ENCODE measurements at regions of chr1 and their contacts with region 1.

Region 1: DNA sequence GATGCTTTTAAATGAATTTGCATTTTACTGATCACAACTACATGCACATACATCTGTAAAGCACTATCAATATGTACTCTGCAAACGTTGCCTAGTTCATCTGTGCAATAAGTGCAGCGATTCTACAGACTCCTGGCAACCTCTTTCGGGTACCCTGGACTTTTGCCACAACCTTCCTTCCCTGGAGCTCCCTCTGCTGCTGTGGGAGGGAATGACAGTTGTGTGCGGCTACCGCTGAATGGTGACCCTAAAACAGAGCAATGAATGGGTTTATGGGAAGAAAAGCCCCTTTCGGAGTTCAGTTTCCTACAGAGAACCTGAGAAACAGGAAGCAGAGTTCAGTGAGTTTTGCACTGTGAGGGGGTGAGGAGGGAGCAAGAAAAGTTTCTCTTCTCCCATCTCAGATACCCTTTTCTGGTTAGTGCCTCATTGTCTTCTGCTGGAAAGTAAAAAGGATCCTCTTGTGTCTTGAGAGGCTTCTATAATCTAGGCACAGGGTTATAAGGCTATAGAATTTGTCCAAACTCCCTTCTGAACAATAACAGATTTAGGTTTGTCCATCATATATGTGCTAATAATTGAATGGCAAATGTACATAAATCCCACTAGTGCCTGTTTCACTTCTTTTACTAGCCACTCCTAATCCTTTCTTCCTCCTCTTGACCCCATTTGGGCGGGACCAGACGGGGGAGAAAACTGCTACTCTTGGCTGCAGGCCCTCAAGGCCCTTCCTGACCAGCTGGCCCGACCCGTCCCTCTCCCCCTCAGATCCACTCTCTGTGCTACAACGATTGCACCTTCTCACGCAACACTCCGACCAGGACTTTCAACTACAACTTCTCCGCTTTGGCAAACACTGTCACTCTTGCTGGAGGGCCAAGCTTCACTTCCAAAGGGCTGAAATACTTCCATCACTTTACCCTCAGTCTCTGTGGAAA is 19.8 kb upstream of the SARS1 start:
- DNase-seq: peak; percentile 47
- ATAC-seq: peak; percentile 97
- H3K4me3 Mint-ChIP-seq: peak overlapping the region; percentile 19
- H3K27ac Mint-ChIP-seq: no peak overlapping the region
- H3K4me1 Mint-ChIP-seq: peaks cover 14% of the 10 kb centered on the region
- H3K27me3 Mint-ChIP-seq: no peaks in the 10 kb centered on the region
- CTCF ChIP-seq: no peak

Region 2: DNA sequence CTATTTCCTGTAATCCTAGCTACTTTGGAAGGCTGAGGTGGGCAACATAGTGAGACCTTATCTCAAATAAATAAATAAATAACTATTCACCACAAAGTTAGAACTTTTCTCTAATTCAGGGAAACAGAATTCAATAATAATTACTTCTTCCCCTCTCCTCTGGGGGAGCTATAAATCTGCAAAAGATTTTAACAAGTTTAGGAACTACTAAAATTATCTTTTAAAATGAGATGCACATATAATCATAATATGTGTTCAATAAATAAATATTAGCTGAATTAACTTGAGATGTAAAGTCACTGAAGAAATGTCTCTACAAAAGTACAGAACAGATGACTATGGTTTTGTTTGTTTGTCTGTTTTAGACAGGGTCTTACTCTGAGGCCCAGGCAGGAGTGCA is 166.1 kb before region 1 on chr1:
- CTCF ChIA-PET with region 1: interaction called, 4 read pairs
- POLR2A ChIA-PET with region 1: no interaction called
- intact Hi-C with region 1: loop called (anchors 5 kb)
- DNase-seq: no peak
- ATAC-seq: no peak
- H3K4me3 Mint-ChIP-seq: no peak overlapping the region
- H3K27ac Mint-ChIP-seq: no peak overlapping the region
- H3K4me1 Mint-ChIP-seq: no peaks in the 10 kb centered on the region
- H3K27me3 Mint-ChIP-seq: no peaks in the 10 kb centered on the region
- CTCF ChIP-seq: no peak

Region 3: GRCh38 chr1:109041621-109042468 is 152.1 kb before region 1 on chr1 and contains the start of gene WDR47:
- CTCF ChIA-PET with region 1: no interaction called
- POLR2A ChIA-PET with region 1: no interaction called
- intact Hi-C with region 1: loop called (anchors 5 kb)
- DNase-seq: peak; percentile 89
- ATAC-seq: peak; percentile 96
- H3K4me3 Mint-ChIP-seq: peak within 1 kb of the TSS; percentile 88
- H3K27ac Mint-ChIP-seq: peak within 1 kb of the TSS; percentile 60
- H3K4me1 Mint-ChIP-seq: peaks cover 15% of the 10 kb centered on the region
- H3K27me3 Mint-ChIP-seq: no peaks in the 10 kb centered on the region
- CTCF ChIP-seq: no peak
- total RNA-seq, gene WDR47: 10.3 and 10.9 TPM in 2 replicates

Region 4: GRCh38 chr1:109137964-109138741 is 55.8 kb before region 1 on chr1:
- CTCF ChIA-PET with region 1: no interaction called
- POLR2A ChIA-PET with region 1: no interaction called
- intact Hi-C with region 1: no loop called
- DNase-seq: no peak
- ATAC-seq: no peak
- H3K4me3 Mint-ChIP-seq: no peak overlapping the region
- H3K27ac Mint-ChIP-seq: no peak overlapping the region
- H3K4me1 Mint-ChIP-seq: peaks cover 15% of the 10 kb centered on the region
- H3K27me3 Mint-ChIP-seq: no peaks in the 10 kb centered on the region
- CTCF ChIP-seq: no peak

Region 5: DNA sequence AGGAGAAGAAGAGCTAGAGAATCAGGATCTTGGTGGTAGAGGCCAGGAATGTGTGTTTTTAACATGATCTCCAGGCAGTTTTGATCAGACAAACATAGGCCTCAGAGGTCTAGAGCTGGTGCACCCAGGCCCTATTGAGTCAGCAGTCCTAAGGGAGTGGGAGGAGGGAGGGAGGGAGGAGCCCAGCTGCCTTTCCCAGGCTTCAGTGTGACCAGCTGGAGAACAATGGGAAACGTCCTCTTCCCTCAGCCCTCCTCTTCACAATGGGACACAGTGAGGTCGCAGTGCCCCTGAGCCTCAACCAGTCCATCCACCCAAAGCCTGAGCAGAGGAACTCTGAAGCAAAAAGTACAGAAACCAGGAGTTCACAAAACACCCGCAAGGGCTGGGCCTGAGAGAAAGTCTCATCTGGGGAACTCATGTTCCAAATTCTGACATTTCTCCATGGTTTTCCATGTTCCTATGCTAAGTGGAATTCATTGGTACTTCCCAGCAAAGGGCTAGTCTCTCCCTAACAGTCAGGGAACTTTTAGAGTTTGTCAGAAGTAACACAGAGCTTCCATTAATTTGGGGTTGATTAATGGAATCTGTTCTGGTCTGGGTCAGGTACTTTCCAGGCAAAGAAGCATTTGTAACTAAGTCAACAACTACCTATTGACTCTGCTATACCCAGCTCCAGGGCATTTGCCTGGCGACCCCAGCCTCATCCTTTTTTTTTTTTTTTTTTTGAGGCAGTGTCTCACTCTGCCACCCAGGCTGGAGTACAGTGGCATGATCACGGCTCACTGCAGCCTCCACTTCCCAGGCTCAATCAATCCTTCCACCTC is 42.5 kb before region 1 on chr1:
- CTCF ChIA-PET with region 1: no interaction called
- POLR2A ChIA-PET with region 1: no interaction called
- intact Hi-C with region 1: loop called (anchors 5 kb)
- DNase-seq: no peak
- ATAC-seq: no peak
- H3K4me3 Mint-ChIP-seq: no peak overlapping the region
- H3K27ac Mint-ChIP-seq: no peak overlapping the region
- H3K4me1 Mint-ChIP-seq: peaks cover 14% of the 10 kb centered on the region
- H3K27me3 Mint-ChIP-seq: no peaks in the 10 kb centered on the region
- CTCF ChIP-seq: no peak

Region 6: DNA sequence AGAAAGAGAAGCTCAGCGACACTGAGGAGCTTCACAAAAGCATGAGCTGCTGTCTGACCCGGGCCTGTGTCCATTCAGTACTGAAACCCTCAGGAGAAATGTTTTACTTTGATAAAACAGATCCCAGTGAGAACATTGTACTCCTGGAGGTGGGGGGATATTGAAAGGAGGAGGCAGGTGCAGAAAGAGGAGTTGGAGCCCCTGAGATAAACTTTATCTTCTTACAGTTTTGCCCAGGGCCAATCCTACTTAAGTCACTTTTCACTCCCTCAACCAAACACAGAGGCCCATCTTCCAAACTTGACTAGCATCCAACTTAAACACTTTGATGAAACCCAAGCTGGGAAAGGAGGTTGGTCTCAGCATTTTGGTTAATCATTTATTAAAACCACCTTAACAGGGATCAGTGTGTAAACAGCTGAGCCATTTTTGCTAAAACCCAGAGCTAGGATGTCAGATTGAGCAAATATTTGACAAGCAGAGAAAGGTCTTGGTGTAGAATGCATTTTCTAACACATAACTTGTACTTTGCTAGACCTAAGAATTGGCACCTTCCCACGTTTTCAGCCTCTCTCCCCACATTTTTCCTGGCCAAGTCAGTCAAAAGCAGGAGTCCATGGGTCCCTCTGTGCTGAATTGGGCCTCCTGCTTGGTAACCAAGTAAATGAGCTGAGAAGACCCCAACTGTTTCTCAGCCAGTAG is 12.7 kb before region 1 on chr1:
- CTCF ChIA-PET with region 1: no interaction called
- POLR2A ChIA-PET with region 1: no interaction called
- intact Hi-C with region 1: no loop called
- DNase-seq: no peak
- ATAC-seq: no peak
- H3K4me3 Mint-ChIP-seq: no peak overlapping the region
- H3K27ac Mint-ChIP-seq: no peak overlapping the region
- H3K4me1 Mint-ChIP-seq: no peaks in the 10 kb centered on the region
- H3K27me3 Mint-ChIP-seq: no peaks in the 10 kb centered on the region
- CTCF ChIP-seq: no peak

Measured in activated B cell treated with CpG ODN at 0.5 μM for 24 hours (primary cell).